Caco-2 (cell line): ENCODE measurements at regions of chr10 and their contacts with region 1.

Region 1: DNA sequence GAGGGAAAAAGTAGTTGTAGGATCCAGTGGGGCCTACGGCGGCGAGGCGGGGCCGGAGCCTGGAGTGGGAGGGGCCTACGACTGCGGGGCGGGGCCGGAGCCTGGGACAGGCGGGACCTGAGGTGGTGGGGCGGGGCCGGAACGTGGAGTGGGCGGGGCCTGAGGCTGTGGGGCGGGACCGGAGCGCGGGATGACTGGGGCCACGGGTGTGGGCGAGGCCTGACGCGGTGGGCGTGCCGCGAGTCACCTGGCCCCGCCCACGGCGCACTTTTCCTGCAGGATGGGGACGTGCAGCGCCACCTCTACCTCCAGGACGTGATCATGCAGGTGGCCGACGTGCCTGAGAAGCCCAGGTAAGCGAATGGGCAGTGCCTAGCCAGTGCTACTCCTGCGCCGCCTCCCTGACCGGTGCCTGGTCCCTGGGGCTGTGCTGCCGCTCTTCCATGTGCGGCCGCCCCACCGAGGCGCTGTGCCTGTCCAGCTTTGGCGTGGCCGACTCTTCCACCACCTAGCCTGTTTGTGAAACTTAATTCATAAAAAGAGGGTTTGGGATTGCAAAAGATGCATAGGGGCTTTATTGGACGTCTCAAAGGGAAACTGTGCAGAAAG is 501 bp downstream of the ZNF511 start:
- DNase-seq: peak; percentile 95 to 97
- H3K4me3 ChIP-seq: peak overlapping the region; percentile 99
- H3K4me3 Mint-ChIP-seq: peak overlapping the region; percentile 99
- H3K27ac Mint-ChIP-seq: peak overlapping the region; percentile 100
- H3K4me1 ChIP-seq: peaks cover 7% of the 10 kb centered on the region
- H3K4me1 Mint-ChIP-seq: peaks cover 16% of the 10 kb centered on the region
- H3K27me3 ChIP-seq: no peaks in the 10 kb centered on the region
- H3K27me3 Mint-ChIP-seq: no peaks in the 10 kb centered on the region
- CTCF ChIP-seq: no peak

Region 2: GRCh38 chr10:133139551-133140065 is 169.6 kb before region 1 on chr10:
- CTCF ChIA-PET with region 1: no interaction called
- POLR2A ChIA-PET with region 1: no interaction called
- intact Hi-C with region 1: loop called (anchors 5 kb)
- DNase-seq: peak in 1 of 2 experiments; percentile 69
- H3K4me3 ChIP-seq: no peak overlapping the region
- H3K4me3 Mint-ChIP-seq: no peak overlapping the region
- H3K27ac Mint-ChIP-seq: no peak overlapping the region
- H3K4me1 ChIP-seq: peaks cover 19% of the 10 kb centered on the region
- H3K4me1 Mint-ChIP-seq: peaks cover 5% of the 10 kb centered on the region
- H3K27me3 ChIP-seq: no peaks in the 10 kb centered on the region
- H3K27me3 Mint-ChIP-seq: no peaks in the 10 kb centered on the region
- CTCF ChIP-seq: no peak

Region 3: DNA sequence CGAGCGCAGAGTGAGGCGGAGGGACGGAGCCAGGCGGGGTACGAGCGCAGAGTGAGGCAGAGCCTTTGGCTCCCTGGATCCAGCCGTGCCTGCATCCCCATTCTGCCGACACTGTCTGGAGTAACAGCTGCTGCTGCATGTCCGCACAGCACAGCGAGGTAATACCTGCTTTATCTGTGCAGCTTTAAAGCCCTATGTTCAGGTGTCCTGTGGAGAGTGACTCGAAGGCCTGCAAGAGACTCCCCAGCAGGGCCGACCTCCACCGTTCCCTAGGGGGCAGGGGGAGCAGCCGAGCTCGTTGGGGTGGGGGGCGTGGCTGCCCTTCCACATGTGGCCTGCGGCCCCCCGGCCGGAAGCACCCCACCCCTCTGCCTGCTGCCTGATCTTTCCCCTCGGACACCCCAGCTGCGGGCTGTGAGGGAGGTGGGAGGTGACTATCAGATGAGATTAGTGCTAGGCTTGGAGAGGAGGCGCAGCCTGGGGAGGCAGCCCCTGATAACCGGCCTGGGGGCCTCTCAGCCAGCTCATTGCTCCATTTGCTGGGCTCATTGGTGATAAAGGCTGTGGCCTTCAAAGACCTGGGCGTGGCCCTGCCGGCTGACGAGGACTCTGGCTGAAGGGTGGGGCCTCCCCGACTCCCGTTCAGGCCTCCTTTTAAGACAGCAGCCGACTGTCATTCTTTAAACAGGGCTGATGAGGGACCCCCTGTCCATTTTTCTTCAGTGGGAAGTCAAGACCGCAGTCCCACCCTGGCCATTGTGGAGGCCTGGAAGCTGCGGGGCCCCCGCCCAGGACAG is 63.6 kb before region 1 on chr10:
- CTCF ChIA-PET with region 1: interaction called, 4 read pairs
- POLR2A ChIA-PET with region 1: no interaction called
- intact Hi-C with region 1: loop called (anchors 5 kb)
- DNase-seq: peak; percentile 91 to 94
- H3K4me3 ChIP-seq: no peak overlapping the region
- H3K4me3 Mint-ChIP-seq: no peak overlapping the region
- H3K27ac Mint-ChIP-seq: peak overlapping the region; percentile 15
- H3K4me1 ChIP-seq: peaks cover 43% of the 10 kb centered on the region
- H3K4me1 Mint-ChIP-seq: peaks cover 13% of the 10 kb centered on the region
- H3K27me3 ChIP-seq: no peaks in the 10 kb centered on the region
- H3K27me3 Mint-ChIP-seq: no peaks in the 10 kb centered on the region
- CTCF ChIP-seq: no peak

Region 4: GRCh38 chr10:133261726-133262325 is 47.4 kb before region 1 on chr10:
- CTCF ChIA-PET with region 1: interaction called, 7 read pairs
- POLR2A ChIA-PET with region 1: no interaction called
- intact Hi-C with region 1: loop called (anchors 5 kb)
- DNase-seq: peak; percentile 90 to 91
- H3K4me3 ChIP-seq: peak overlapping the region; percentile 47
- H3K4me3 Mint-ChIP-seq: peak overlapping the region; percentile 64
- H3K27ac Mint-ChIP-seq: no peak overlapping the region
- H3K4me1 ChIP-seq: peaks cover 28% of the 10 kb centered on the region
- H3K4me1 Mint-ChIP-seq: peaks cover 18% of the 10 kb centered on the region
- H3K27me3 ChIP-seq: no peaks in the 10 kb centered on the region
- H3K27me3 Mint-ChIP-seq: no peaks in the 10 kb centered on the region
- CTCF ChIP-seq: no peak

Region 5: GRCh38 chr10:133278577-133279265 is 30.5 kb before region 1 on chr10:
- CTCF ChIA-PET with region 1: interaction called, 3 read pairs
- POLR2A ChIA-PET with region 1: interaction called, 5 read pairs
- intact Hi-C with region 1: loop called (anchors 1 kb)
- DNase-seq: peak; percentile 80 to 86
- H3K4me3 ChIP-seq: no peak overlapping the region
- H3K4me3 Mint-ChIP-seq: peak overlapping the region; percentile 33
- H3K27ac Mint-ChIP-seq: peak overlapping the region; percentile 74
- H3K4me1 ChIP-seq: peaks cover 53% of the 10 kb centered on the region
- H3K4me1 Mint-ChIP-seq: peaks cover 11% of the 10 kb centered on the region
- H3K27me3 ChIP-seq: no peaks in the 10 kb centered on the region
- H3K27me3 Mint-ChIP-seq: no peaks in the 10 kb centered on the region
- CTCF ChIP-seq: no peak

Region 6: GRCh38 chr10:133292919-133293809 is 16.1 kb before region 1 on chr10:
- CTCF ChIA-PET with region 1: no interaction called
- POLR2A ChIA-PET with region 1: no interaction called
- intact Hi-C with region 1: no loop called
- DNase-seq: no peak
- H3K4me3 ChIP-seq: no peak overlapping the region
- H3K4me3 Mint-ChIP-seq: no peak overlapping the region
- H3K27ac Mint-ChIP-seq: no peak overlapping the region
- H3K4me1 ChIP-seq: no peaks in the 10 kb centered on the region
- H3K4me1 Mint-ChIP-seq: no peaks in the 10 kb centered on the region
- H3K27me3 ChIP-seq: no peaks in the 10 kb centered on the region
- H3K27me3 Mint-ChIP-seq: no peaks in the 10 kb centered on the region
- CTCF ChIP-seq: no peak

Region 7: DNA sequence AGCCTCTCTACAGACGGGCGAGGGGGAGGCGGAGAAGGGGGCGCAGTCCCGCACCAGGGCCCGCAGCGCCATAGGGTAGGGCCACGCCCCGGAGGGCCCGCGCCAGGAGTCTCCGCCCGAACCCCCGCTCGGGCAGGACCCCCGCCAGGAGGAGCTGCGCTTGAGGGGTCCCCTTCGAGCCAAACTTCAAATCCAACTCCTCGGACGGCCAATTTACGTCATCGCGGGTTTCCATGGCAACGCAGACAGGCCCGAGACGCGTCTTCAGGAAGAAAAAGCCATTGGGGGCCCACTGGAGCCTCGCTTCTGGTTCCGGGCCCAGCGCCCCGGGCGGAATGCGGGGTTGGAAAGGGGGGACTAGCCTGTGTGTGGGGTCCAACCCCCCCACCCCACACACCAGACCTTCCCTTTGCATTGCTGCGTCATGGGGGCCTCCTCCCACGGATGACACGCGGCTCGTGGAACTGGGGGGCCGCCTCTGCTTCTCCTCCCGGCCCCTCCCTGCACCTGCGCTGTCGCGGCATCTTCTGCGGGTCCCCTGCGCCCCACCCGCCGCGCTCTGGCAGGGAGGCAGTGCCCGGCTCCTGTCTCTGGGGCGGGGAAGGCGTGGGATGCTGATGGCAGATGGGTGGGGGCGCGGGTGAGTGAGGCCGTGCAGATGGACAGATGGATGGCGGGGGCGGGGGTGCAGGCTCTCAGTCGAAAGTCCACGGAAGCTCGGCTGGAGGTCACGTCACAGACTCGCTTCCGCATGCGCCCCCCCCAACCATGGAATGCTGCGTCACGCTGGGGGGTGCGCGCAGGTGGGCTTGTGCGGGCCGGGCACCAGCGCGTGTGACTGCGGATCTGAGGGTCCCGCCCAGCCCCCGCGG is 26.3 kb after region 1 on chr10:
- CTCF ChIA-PET with region 1: no interaction called
- POLR2A ChIA-PET with region 1: no interaction called
- intact Hi-C with region 1: no loop called
- DNase-seq: no peak
- H3K4me3 ChIP-seq: peak overlapping the region; percentile 31
- H3K4me3 Mint-ChIP-seq: peak overlapping the region; percentile 64
- H3K27ac Mint-ChIP-seq: no peak overlapping the region
- H3K4me1 ChIP-seq: peaks cover 22% of the 10 kb centered on the region
- H3K4me1 Mint-ChIP-seq: no peaks in the 10 kb centered on the region
- H3K27me3 ChIP-seq: peaks cover 7% of the 10 kb centered on the region
- H3K27me3 Mint-ChIP-seq: peaks cover 27% of the 10 kb centered on the region
- CTCF ChIP-seq: no peak

Region 8: GRCh38 chr10:133378251-133379096 is 69.3 kb after region 1 on chr10:
- CTCF ChIA-PET with region 1: interaction called, 3 read pairs
- POLR2A ChIA-PET with region 1: no interaction called
- intact Hi-C with region 1: loop called (anchors 5 kb)
- DNase-seq: peak; percentile 73 to 78
- H3K4me3 ChIP-seq: peak overlapping the region; percentile 97
- H3K4me3 Mint-ChIP-seq: peak overlapping the region; percentile 81
- H3K27ac Mint-ChIP-seq: peak overlapping the region; percentile 45
- H3K4me1 ChIP-seq: peaks cover 16% of the 10 kb centered on the region
- H3K4me1 Mint-ChIP-seq: no peaks in the 10 kb centered on the region
- H3K27me3 ChIP-seq: no peaks in the 10 kb centered on the region
- H3K27me3 Mint-ChIP-seq: no peaks in the 10 kb centered on the region
- CTCF ChIP-seq: no peak

Region 9: GRCh38 chr10:133394064-133394663 is 84.9 kb after region 1 on chr10 and contains the start of gene MTG1:
- CTCF ChIA-PET with region 1: no interaction called
- POLR2A ChIA-PET with region 1: no interaction called
- intact Hi-C with region 1: loop called (anchors 1 kb)
- DNase-seq: peak; percentile 95 to 100
- H3K4me3 ChIP-seq: peak within 1 kb of the TSS; percentile 79
- H3K4me3 Mint-ChIP-seq: peak within 1 kb of the TSS; percentile 81
- H3K27ac Mint-ChIP-seq: peak within 1 kb of the TSS; percentile 86
- H3K4me1 ChIP-seq: 0 out of 2 replicates have a peak, but pooled peaks cover 4% of the 10 kb centered on the region
- H3K4me1 Mint-ChIP-seq: no peaks in the 10 kb centered on the region
- H3K27me3 ChIP-seq: no peaks in the 10 kb centered on the region
- H3K27me3 Mint-ChIP-seq: no peaks in the 10 kb centered on the region
- CTCF ChIP-seq: peak in 1 of 2 experiments; percentile 54
- total RNA-seq, gene MTG1: 111 and 113 TPM in 2 replicates